ENCODE measurements at regions of chr2 and their contacts with region 1.

Region 1: DNA sequence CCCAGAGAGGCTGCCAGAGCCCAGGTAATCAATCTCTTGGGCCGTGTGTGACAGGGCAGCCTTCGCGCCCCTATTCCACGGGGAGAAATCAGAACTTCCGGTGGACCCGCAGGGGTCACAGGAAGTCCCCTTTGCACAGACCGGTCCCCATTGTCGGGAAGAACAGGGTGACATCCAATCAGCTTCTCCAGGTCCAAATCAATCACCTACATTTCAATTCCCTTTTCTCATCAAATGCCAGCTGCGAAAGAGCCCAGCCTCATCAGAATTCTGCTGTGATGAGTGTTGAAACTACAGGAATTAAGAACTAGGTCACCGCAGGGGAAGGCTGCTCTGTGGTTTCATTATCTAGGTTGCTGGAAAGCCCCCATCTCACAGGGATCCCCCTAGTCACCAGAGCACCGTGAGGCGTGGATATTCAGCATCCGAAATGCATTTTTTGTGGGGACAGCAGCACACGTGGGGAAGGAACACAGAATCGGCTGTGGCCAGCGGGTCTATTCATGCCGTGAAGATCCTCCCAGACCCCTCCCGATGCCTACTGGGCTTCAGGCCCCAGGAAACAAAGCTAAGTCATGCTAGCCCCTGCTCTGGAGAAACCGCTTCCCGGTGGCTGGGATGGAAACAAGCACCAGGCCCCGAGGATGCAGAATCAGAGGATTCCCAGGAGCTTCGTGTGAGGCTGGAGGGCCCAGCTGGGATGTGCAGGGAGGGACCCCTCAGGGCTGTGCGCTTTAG is 193.7 kb upstream of the ID2 start:
- DNase-seq: peak; percentile 54 to 88 (median 77)
- H3K4me3 ChIP-seq: peak overlapping the region; percentile 57
- H3K4me3 Mint-ChIP-seq: peak overlapping the region; percentile 86 to 94 (median 91)
- H3K27ac ChIP-seq: peak overlapping the region; percentile 73
- H3K27ac Mint-ChIP-seq: peak overlapping the region; percentile 89 to 100 (median 98)
- H3K4me1 ChIP-seq: peaks cover 39% of the 10 kb centered on the region
- H3K4me1 Mint-ChIP-seq: peaks cover 56 to 66% (median 62%) of the 10 kb centered on the region in 3 donors
- H3K27me3 ChIP-seq: no peaks in the 10 kb centered on the region
- H3K27me3 Mint-ChIP-seq: peaks cover 0 to 1% of the 10 kb centered on the region in 2 donors

Region 2: DNA sequence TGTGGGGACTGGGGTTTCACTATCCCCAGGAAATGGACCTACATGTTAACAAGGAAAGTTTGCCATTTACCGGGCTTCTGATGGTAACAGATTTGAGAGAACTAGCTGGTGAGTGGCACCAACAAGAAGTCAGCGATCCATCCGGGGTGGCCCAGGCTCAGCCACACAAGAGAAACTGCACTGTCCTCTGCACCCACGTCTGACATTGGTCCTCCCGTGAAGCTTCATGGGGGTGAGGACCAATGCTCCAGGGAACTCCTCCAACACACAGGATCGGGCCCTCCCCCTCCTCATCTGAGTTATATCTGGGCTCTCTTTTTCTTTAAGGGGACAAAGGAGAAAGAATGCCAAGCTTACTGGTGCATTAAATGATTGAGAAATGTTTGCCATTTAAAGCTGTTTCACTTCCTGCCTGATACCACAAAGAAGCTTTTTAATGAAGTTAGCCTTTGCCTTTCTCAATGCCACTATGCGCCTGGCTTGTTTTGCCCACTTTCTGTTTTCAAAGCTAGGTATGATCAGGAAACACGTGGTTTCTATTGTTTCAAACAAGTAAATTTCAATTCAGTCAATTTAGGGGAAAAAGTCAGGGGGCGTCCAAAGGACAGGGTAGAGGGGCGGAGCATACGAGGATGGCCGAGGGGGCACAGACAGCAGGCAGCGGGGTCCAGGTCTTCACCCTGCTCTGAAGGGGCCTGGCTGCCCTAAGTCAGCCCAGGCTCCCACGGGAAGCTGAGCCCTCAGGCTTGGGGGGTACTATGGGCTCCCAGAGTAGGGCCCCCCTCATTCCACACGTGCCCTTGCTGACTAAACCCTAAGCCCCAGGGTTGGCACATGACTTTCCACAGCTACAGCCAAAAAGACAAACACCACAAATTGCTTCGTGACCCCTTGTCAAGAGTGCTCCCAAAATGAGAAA is 10.4 kb before region 1 on chr2:
- CTCF ChIA-PET with region 1: interaction called, 12 read pairs
- POLR2A ChIA-PET with region 1: interaction called, 11 read pairs
- DNase-seq: peak in 2 of 5 donors; percentile 54 to 58
- H3K4me3 ChIP-seq: peak overlapping the region; percentile 10
- H3K4me3 Mint-ChIP-seq: peak overlapping the region; percentile 47 to 85 (median 84)
- H3K27ac ChIP-seq: peak overlapping the region; percentile 27
- H3K27ac Mint-ChIP-seq: peak overlapping the region; percentile 86 to 99 (median 96)
- H3K4me1 ChIP-seq: peaks cover 54% of the 10 kb centered on the region
- H3K4me1 Mint-ChIP-seq: peaks cover 89 to 100% (median 98%) of the 10 kb centered on the region in 3 donors
- H3K27me3 ChIP-seq: no peaks in the 10 kb centered on the region
- H3K27me3 Mint-ChIP-seq: no peaks in the 10 kb centered on the region

Region 3: GRCh38 chr2:8574144-8575037 is 86.2 kb after region 1 on chr2:
- CTCF ChIA-PET with region 1: no interaction called
- POLR2A ChIA-PET with region 1: no interaction called
- DNase-seq: no peak
- H3K4me3 ChIP-seq: peak overlapping the region; percentile 22
- H3K4me3 Mint-ChIP-seq: peak overlapping the region in 6 of 7 donors; percentile 60 to 84 (median 72)
- H3K27ac ChIP-seq: no peak overlapping the region
- H3K27ac Mint-ChIP-seq: peak overlapping the region in 1 of 8 donors; percentile 36
- H3K4me1 ChIP-seq: peaks cover 28% of the 10 kb centered on the region
- H3K4me1 Mint-ChIP-seq: peaks cover 32 to 40% (median 33%) of the 10 kb centered on the region in 3 donors
- H3K27me3 ChIP-seq: no peaks in the 10 kb centered on the region
- H3K27me3 Mint-ChIP-seq: no peaks in the 10 kb centered on the region

Region 4: GRCh38 chr2:8656160-8656641 is 168.0 kb after region 1 on chr2:
- CTCF ChIA-PET with region 1: no interaction called
- POLR2A ChIA-PET with region 1: no interaction called
- DNase-seq: no peak
- H3K4me3 ChIP-seq: no peak overlapping the region
- H3K4me3 Mint-ChIP-seq: no peak overlapping the region
- H3K27ac ChIP-seq: no peak overlapping the region
- H3K27ac Mint-ChIP-seq: peak overlapping the region in 1 of 8 donors; percentile 73
- H3K4me1 ChIP-seq: no peaks in the 10 kb centered on the region
- H3K4me1 Mint-ChIP-seq: peaks cover 7 to 15% (median 9%) of the 10 kb centered on the region in 3 donors
- H3K27me3 ChIP-seq: no peaks in the 10 kb centered on the region
- H3K27me3 Mint-ChIP-seq: peaks cover 7 to 23% of the 10 kb centered on the region in 2 donors

Measured in CD8-positive, alpha-beta memory T cell (primary cell).